ENCODE measurements at regions of chr6 and their contacts with region 1.

Region 1: DNA sequence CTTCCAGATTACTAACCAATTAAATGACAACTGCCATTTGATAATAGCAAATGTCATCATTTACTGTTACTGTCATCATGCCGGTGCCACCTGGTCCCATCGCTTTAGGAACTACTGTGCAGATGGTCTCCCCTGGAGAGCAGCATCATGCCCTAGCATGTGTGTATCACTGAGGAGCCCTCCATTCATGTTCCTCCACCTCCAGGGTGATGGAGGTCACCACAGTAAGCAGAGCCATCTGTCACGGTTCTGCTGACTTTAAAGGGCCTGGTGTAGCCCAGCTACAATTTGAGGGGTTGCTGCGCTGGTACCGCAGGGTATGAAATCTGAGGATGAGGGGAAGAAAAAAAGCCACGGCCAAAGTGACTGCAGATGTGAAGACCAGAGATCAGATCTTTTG is 118.8 kb upstream of the KCNK16 start:
- DNase-seq: no peak
- CTCF ChIP-seq: no peak

Region 2: GRCh38 chr6:39451831-39452230 is 10.5 kb after region 1 on chr6:
- CTCF ChIA-PET with region 1: interaction called, 11 read pairs
- POLR2A ChIA-PET with region 1: no interaction called
- DNase-seq: no peak
- CTCF ChIP-seq: peak; percentile 21

Measured in GM10248 (cell line).